Caco-2 (cell line): ENCODE measurements at regions of chr17 and their contacts with region 1.

Region 1: DNA sequence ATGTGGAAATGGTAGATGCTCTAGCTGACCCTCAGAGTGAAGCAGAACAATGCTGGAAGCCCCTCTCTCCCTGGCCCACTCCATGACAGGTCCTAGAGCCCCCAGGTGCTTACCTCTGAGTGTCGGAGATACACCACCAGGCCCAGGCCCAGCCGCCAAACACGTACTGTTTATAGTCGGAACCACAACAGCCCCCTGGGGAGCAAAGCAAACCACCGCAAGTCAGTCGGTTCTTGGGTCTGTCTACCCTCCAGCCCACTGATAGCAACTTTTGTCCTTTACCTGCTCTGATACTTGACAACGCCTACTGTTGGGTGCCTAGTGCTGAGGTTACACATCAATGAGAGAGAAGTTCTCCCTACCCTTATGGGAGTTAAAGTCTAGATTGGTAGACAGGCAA is 8.7 kb downstream of the FLOT2 start:
- DNase-seq: no peak
- H3K4me3 ChIP-seq: no peak overlapping the region
- H3K4me3 Mint-ChIP-seq: no peak overlapping the region
- H3K27ac Mint-ChIP-seq: no peak overlapping the region
- H3K4me1 ChIP-seq: no peaks in the 10 kb centered on the region
- H3K4me1 Mint-ChIP-seq: peaks cover 4% of the 10 kb centered on the region
- H3K27me3 ChIP-seq: no peaks in the 10 kb centered on the region
- H3K27me3 Mint-ChIP-seq: no peaks in the 10 kb centered on the region
- CTCF ChIP-seq: no peak

Region 2: GRCh38 chr17:29111816-29112499 is 223.1 kb after region 1 on chr17:
- CTCF ChIA-PET with region 1: interaction called, 11 read pairs
- POLR2A ChIA-PET with region 1: no interaction called
- intact Hi-C with region 1: no loop called
- DNase-seq: peak; percentile 65 to 84
- H3K4me3 ChIP-seq: no peak overlapping the region
- H3K4me3 Mint-ChIP-seq: no peak overlapping the region
- H3K27ac Mint-ChIP-seq: no peak overlapping the region
- H3K4me1 ChIP-seq: peaks cover 9% of the 10 kb centered on the region
- H3K4me1 Mint-ChIP-seq: no peaks in the 10 kb centered on the region
- H3K27me3 ChIP-seq: no peaks in the 10 kb centered on the region
- H3K27me3 Mint-ChIP-seq: no peaks in the 10 kb centered on the region
- CTCF ChIP-seq: peak; percentile 86 to 98